ENCODE measurements at regions of chr1 and their contacts with region 1.

Region 1: GRCh38 chr1:233790662-233791375 is 113.7 kb upstream of the SLC35F3 start:
- DNase-seq: peak; percentile 14 to 38 (median 27)
- H3K4me3 ChIP-seq: no peak overlapping the region
- H3K4me3 Mint-ChIP-seq: no peak overlapping the region
- H3K27ac ChIP-seq: no peak overlapping the region
- H3K27ac Mint-ChIP-seq: no peak overlapping the region
- H3K4me1 ChIP-seq: no peaks in the 10 kb centered on the region
- H3K4me1 Mint-ChIP-seq: no peaks in the 10 kb centered on the region
- H3K27me3 ChIP-seq: no peaks in the 10 kb centered on the region
- H3K27me3 Mint-ChIP-seq: peaks cover 0 to 7% (median 4%) of the 10 kb centered on the region in 3 donors
- CTCF ChIP-seq: peak; percentile 82

Region 2: GRCh38 chr1:233304489-233305102 is 486.2 kb before region 1 on chr1:
- intact Hi-C with region 1: loop called in 1 of 2 experiments (anchors 10 kb)
- DNase-seq: peak in 2 of 3 donors; percentile 23 to 52
- H3K4me3 ChIP-seq: no peak overlapping the region
- H3K4me3 Mint-ChIP-seq: no peak overlapping the region
- H3K27ac ChIP-seq: no peak overlapping the region
- H3K27ac Mint-ChIP-seq: no peak overlapping the region
- H3K4me1 ChIP-seq: no peaks in the 10 kb centered on the region
- H3K4me1 Mint-ChIP-seq: no peaks in the 10 kb centered on the region
- H3K27me3 ChIP-seq: no peaks in the 10 kb centered on the region
- H3K27me3 Mint-ChIP-seq: peaks cover 0 to 2% (median 1%) of the 10 kb centered on the region in 3 donors
- CTCF ChIP-seq: peak; percentile 89

Measured in CD14-positive monocyte (primary cell).